ENCODE measurements at regions of chr5 and their contacts with region 1.

Region 1: DNA sequence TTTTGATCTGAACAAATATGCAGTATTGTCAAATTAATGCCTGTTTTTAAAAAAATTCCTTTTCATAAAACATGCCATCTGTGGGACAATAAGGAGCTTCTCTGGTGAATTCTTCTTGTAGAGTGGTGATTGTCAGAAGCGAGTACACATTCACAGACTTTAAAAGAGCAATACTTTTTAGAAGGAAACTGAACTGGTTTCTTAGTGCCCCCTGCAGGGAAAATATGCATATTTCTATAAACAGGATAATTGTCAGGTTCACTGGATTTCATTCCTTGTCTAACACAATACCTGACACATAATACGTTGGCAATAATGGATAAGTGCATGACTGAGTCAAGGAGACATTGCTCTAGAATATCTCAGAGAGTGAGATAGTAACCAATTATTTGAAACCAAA is 133.7 kb downstream of the KIF4B start:
- DNase-seq: no peak

Region 2: GRCh38 chr5:154967421-154968024 is 179.7 kb before region 1 on chr5:
- intact Hi-C with region 1: loop called (anchors 10 kb)
- DNase-seq: peak in 14 of 42 donors; percentile 16 to 74 (median 36)